H1 (cell line): ENCODE measurements at regions of chr6 and their contacts with region 1.

Region 1: GRCh38 chr6:108896111-108896661 is 48.0 kb downstream of the ARMC2 start:
- DNase-seq: no peak
- H3K4me3 ChIP-seq: no peak overlapping the region
- H3K27ac ChIP-seq: no peak overlapping the region
- H3K4me1 ChIP-seq: no peaks in the 10 kb centered on the region
- H3K27me3 ChIP-seq: no peaks in the 10 kb centered on the region
- CTCF ChIP-seq: no peak
- EP300 ChIP-seq: no peak
- POLR2A ChIP-seq: no peak
- RAD21 ChIP-seq: no peak

Region 2: DNA sequence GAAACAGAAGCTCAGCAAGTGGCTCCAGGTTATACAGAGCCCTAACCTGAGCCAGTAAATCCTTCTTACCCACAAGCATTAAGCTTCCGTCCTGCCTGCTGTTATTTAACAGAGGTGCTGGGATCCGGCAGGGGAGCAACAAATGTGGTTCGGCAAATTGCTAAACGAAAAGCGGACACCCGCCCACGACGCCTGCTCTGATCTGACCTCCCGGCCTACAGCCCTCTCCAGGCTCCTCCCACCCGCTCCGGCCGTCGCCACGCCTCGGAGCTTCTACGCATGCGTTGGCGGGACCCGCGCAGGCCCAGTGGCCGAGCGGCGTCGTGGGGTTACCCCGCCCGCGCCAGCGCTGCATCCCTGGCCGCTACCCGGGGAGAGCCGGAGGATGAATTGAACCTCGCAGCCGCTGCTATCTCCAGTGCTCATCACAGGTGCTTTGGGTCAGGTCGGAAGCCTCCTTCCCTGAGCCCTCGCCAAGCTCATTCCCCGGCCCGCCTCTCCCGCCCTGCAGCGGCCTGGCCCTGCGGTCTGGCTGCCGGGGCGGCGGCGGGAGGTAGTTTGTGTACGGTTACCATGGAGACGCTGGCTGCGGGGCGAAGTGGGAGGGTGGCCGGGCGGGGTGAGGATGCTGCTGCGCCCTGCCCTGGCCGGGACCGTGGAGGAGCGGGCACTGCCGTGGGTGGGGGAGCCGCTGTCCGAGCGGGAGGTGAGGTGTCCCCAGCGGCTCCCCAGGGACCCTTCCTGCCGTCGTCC is 47.9 kb before region 1 on chr6 and contains the start of gene ARMC2:
- CTCF ChIA-PET with region 1: interaction called, 17 read pairs
- POLR2A ChIA-PET with region 1: no interaction called
- DNase-seq: peak; percentile 73 to 98
- H3K4me3 ChIP-seq: peak within 1 kb of the TSS; percentile 76 to 88 (median 81)
- H3K27ac ChIP-seq: 0 out of 2 replicates have a peak within 1 kb of the TSS, but pooled peaks have one; percentile 6
- H3K4me1 ChIP-seq: peaks cover 0 to 8% (median 0%) of the 10 kb centered on the region in 4 experiments; a peak in 2 of 7 replicates
- H3K27me3 ChIP-seq: no peaks in the 10 kb centered on the region
- CTCF ChIP-seq: no peak
- EP300 ChIP-seq: no peak
- POLR2A ChIP-seq: no peak
- RAD21 ChIP-seq: no peak
- total RNA-seq, gene ARMC2: 4.3 and 4.4 TPM in 2 replicates

Region 3: GRCh38 chr6:108948181-108948661 is 52.0 kb after region 1 on chr6:
- CTCF ChIA-PET with region 1: no interaction called
- POLR2A ChIA-PET with region 1: no interaction called
- DNase-seq: no peak
- H3K4me3 ChIP-seq: no peak overlapping the region
- H3K27ac ChIP-seq: no peak overlapping the region
- H3K4me1 ChIP-seq: peaks cover 0 to 3% (median 2%) of the 10 kb centered on the region in 4 experiments; a peak in 6 of 7 replicates
- H3K27me3 ChIP-seq: no peaks in the 10 kb centered on the region
- CTCF ChIP-seq: no peak
- EP300 ChIP-seq: no peak
- POLR2A ChIP-seq: no peak
- RAD21 ChIP-seq: no peak